ENCODE measurements at regions of chr7 and their contacts with region 1.

Region 1: DNA sequence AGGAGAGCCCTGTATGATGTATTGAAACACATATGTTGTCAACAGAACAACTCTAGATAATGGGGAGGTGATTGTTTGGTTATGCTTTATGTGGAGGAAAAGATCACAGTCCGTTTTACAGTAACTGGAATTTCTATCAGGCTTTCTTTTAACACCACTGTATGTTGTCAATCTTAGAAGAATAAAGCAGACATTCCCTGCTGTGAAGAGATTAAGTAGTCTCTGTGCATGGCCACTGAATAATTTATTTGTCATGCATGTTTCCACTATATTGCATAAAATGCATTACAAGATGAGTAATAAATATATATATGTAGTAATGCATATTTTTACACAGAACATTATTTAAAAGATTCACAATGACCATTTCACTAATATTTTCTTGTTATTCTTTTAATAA is 440.0 kb downstream of the ANKRD7 start:
- DNase-seq: no peak
- ATAC-seq: no peak
- H3K4me3 ChIP-seq: no peak overlapping the region
- H3K27ac ChIP-seq: no peak overlapping the region
- H3K4me1 ChIP-seq: no peaks in the 10 kb centered on the region
- H3K27me3 ChIP-seq: no peaks in the 10 kb centered on the region
- CTCF ChIP-seq: no peak
- POLR2A ChIP-seq: no peak
- RAD21 ChIP-seq: no peak

Region 2: DNA sequence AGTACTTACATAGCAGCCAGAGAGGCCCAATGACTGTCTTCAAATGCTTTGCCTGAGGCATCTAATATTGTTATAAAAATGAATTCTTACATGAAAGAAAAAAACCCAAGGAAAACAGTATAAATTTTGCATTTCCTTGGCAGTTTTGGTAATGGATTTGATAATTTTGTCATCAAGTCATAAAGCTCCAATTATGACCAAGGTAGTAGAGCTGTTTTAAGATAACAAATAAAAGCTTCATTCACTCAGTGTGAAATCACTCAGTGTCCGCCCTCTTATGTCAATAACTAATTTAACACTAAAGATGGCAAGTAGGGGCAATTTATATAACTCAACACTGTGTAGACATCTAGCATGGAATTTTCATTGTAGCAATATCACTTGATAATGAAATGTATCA is 246.1 kb before region 1 on chr7:
- CTCF ChIA-PET with region 1: no interaction called
- POLR2A ChIA-PET with region 1: interaction called, 15 read pairs
- dilution Hi-C with region 1: no loop called
- in situ Hi-C with region 1: no loop called
- intact Hi-C with region 1: no loop called
- DNase-seq: no peak
- ATAC-seq: no peak
- H3K4me3 ChIP-seq: no peak overlapping the region
- H3K27ac ChIP-seq: no peak overlapping the region
- H3K4me1 ChIP-seq: no peaks in the 10 kb centered on the region
- H3K27me3 ChIP-seq: no peaks in the 10 kb centered on the region
- CTCF ChIP-seq: no peak
- POLR2A ChIP-seq: no peak
- RAD21 ChIP-seq: no peak

Region 3: GRCh38 chr7:118696879-118697278 is 32.4 kb after region 1 on chr7:
- CTCF ChIA-PET with region 1: no interaction called
- POLR2A ChIA-PET with region 1: no interaction called
- dilution Hi-C with region 1: no loop called
- in situ Hi-C with region 1: no loop called
- intact Hi-C with region 1: no loop called
- DNase-seq: no peak
- ATAC-seq: no peak
- H3K4me3 ChIP-seq: no peak overlapping the region
- H3K27ac ChIP-seq: no peak overlapping the region
- H3K4me1 ChIP-seq: no peaks in the 10 kb centered on the region
- H3K27me3 ChIP-seq: no peaks in the 10 kb centered on the region
- CTCF ChIP-seq: no peak
- POLR2A ChIP-seq: no peak
- RAD21 ChIP-seq: no peak

Measured in IMR-90 (cell line).